H1 (cell line): ENCODE measurements at regions of chr4 and their contacts with region 1.

Region 1: GRCh38 chr4:108650212-108651013 is at the start of gene OSTC:
- DNase-seq: peak; percentile 75 to 93
- H3K4me3 ChIP-seq: peak within 1 kb of the TSS; percentile 67 to 98 (median 89)
- H3K27ac ChIP-seq: peak within 1 kb of the TSS; percentile 80
- H3K4me1 ChIP-seq: no peaks in the 10 kb centered on the region
- H3K27me3 ChIP-seq: no peaks in the 10 kb centered on the region
- CTCF ChIP-seq: peak in 1 of 3 experiments; percentile 8; a peak in 1 of 4 replicates
- EP300 ChIP-seq: no peak
- POLR2A ChIP-seq: peak; percentile 52 to 88
- RAD21 ChIP-seq: no peak
- total RNA-seq, gene OSTC: 176 and 178 TPM in 2 replicates

Region 2: GRCh38 chr4:108620101-108620932 is 30.1 kb before region 1 on chr4 and contains the start of gene RPL34:
- CTCF ChIA-PET with region 1: no interaction called
- POLR2A ChIA-PET with region 1: interaction called, 25 read pairs
- DNase-seq: peak; percentile 77 to 88
- H3K4me3 ChIP-seq: peak within 1 kb of the TSS; percentile 72 to 100 (median 96)
- H3K27ac ChIP-seq: peak within 1 kb of the TSS; percentile 92
- H3K4me1 ChIP-seq: peaks cover 0 to 6% (median 3%) of the 10 kb centered on the region in 4 experiments; a peak in 3 of 7 replicates
- H3K27me3 ChIP-seq: no peaks in the 10 kb centered on the region
- CTCF ChIP-seq: no peak
- EP300 ChIP-seq: no peak
- POLR2A ChIP-seq: peak; percentile 92 to 99
- RAD21 ChIP-seq: no peak
- total RNA-seq, gene RPL34: 1,419 and 1,430 TPM in 2 replicates

Region 3: GRCh38 chr4:108628411-108628810 is 22.0 kb before region 1 on chr4:
- CTCF ChIA-PET with region 1: interaction called, 3 read pairs
- POLR2A ChIA-PET with region 1: interaction called, 25 read pairs
- DNase-seq: no peak
- H3K4me3 ChIP-seq: no peak overlapping the region
- H3K27ac ChIP-seq: no peak overlapping the region
- H3K4me1 ChIP-seq: no peaks in the 10 kb centered on the region
- H3K27me3 ChIP-seq: no peaks in the 10 kb centered on the region
- CTCF ChIP-seq: no peak
- EP300 ChIP-seq: no peak
- POLR2A ChIP-seq: peak in 1 of 2 experiments; percentile 19; a peak in 1 of 3 replicates
- RAD21 ChIP-seq: no peak

Region 4: GRCh38 chr4:108662629-108663028 is 12.2 kb after region 1 on chr4:
- CTCF ChIA-PET with region 1: interaction called, 4 read pairs
- POLR2A ChIA-PET with region 1: interaction called, 13 read pairs
- DNase-seq: no peak
- H3K4me3 ChIP-seq: no peak overlapping the region
- H3K27ac ChIP-seq: no peak overlapping the region
- H3K4me1 ChIP-seq: no peaks in the 10 kb centered on the region
- H3K27me3 ChIP-seq: no peaks in the 10 kb centered on the region
- CTCF ChIP-seq: no peak
- EP300 ChIP-seq: no peak
- POLR2A ChIP-seq: no peak
- RAD21 ChIP-seq: no peak